Motor neuron (in vitro differentiated cells): ENCODE measurements at regions of chr17 and their contacts with region 1.

Region 1: DNA sequence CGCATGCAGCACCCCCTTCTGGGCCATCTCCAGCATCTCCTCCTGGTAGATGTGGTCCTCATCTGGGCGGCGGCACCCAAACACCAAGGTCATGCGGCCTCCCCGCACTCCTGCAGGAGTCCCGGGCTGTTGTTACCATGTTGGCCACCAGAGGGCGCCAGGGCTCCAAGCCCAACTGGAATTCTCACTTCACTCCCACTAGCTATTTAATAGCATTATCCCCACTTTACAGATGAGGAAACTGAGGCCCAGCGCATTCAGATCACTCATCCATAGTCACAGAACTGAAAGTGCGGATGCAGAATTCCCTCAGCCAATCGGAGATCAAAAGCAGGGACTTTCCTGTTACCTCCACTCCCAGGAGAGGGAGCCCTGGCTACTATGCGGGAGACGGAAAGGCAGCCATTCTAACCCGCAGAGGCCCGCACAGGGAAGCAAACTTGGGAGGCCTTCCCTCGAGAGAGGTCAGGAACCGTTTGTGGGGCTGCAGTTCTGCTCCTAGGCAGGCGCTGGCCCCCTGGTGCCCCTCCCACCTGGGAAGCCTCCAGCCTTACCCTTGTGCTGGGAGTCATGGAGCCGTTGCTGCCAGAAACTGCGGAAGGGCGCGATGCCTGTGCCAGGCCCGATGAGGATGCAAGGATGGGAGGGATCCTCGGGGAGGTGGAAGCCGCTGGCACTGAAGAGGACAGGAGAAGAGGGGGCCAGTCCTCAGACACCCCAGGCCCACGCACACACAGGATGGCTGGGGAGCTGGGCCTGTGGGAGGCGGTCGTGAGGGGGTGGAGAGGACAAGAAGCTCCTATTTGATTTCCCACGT is 40.1 kb downstream of the NOS2 start:
- ATAC-seq: peak in 4 of 8 experiments; percentile 23 to 73 (median 62)
- H3K4me3 ChIP-seq: no peak overlapping the region
- H3K27ac ChIP-seq: no peak overlapping the region
- H3K4me1 ChIP-seq: no peaks in the 10 kb centered on the region

Region 2: GRCh38 chr17:27862004-27862403 is 101.7 kb after region 1 on chr17:
- in situ Hi-C with region 1: loop called in 1 of 9 experiments (anchors 25 kb)
- ATAC-seq: peak in 6 of 8 experiments; percentile 14 to 68 (median 57)
- H3K4me3 ChIP-seq: no peak overlapping the region
- H3K27ac ChIP-seq: no peak overlapping the region
- H3K4me1 ChIP-seq: peaks cover 0 to 3% of the 10 kb centered on the region in 2 donors